H1 (cell line): ENCODE measurements at regions of chr15 and their contacts with region 1.

Region 1: DNA sequence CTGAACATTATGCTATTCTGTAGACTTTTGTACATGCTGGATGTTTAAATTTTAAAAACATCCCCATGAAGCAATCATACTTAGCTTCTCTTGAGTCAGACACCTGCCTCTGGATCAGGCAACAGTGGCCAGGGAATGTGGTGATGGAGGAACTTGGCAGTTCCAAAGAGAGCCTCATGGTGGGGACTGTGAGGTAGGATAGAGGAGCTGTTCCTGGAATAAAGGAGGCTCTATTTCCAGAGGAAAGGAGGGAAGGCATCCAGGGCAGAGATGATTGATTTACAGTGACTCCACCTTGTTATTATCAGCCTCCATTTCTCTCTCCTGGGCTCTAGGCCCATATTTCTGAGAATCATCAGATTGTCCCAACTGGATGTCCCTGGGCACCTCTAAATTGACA is 35.0 kb upstream of the ABHD17C start:
- DNase-seq: peak in 1 of 2 experiments; percentile 52
- H3K4me3 ChIP-seq: no peak overlapping the region
- H3K27ac ChIP-seq: no peak overlapping the region
- H3K4me1 ChIP-seq: no peaks in the 10 kb centered on the region
- H3K27me3 ChIP-seq: no peaks in the 10 kb centered on the region; a peak in 1 of 7 replicates
- CTCF ChIP-seq: peak; percentile 57 to 81 (median 75)
- EP300 ChIP-seq: no peak
- POLR2A ChIP-seq: no peak
- RAD21 ChIP-seq: peak; percentile 83 to 86

Region 2: GRCh38 chr15:80485370-80486164 is 174.6 kb before region 1 on chr15:
- CTCF ChIA-PET with region 1: no interaction called
- POLR2A ChIA-PET with region 1: no interaction called
- DNase-seq: no peak
- H3K4me3 ChIP-seq: no peak overlapping the region
- H3K27ac ChIP-seq: no peak overlapping the region
- H3K4me1 ChIP-seq: peaks cover 0 to 4% (median 2%) of the 10 kb centered on the region in 4 experiments; a peak in 4 of 7 replicates
- H3K27me3 ChIP-seq: no peaks in the 10 kb centered on the region
- CTCF ChIP-seq: no peak
- EP300 ChIP-seq: no peak
- POLR2A ChIP-seq: no peak
- RAD21 ChIP-seq: no peak

Region 3: GRCh38 chr15:80588801-80589200 is 71.3 kb before region 1 on chr15:
- CTCF ChIA-PET with region 1: interaction called, 13 read pairs
- POLR2A ChIA-PET with region 1: no interaction called
- DNase-seq: no peak
- H3K4me3 ChIP-seq: no peak overlapping the region
- H3K27ac ChIP-seq: no peak overlapping the region
- H3K4me1 ChIP-seq: peaks cover 0 to 6% (median 5%) of the 10 kb centered on the region in 4 experiments; a peak in 4 of 7 replicates
- H3K27me3 ChIP-seq: no peaks in the 10 kb centered on the region
- CTCF ChIP-seq: no peak
- EP300 ChIP-seq: no peak
- POLR2A ChIP-seq: no peak
- RAD21 ChIP-seq: no peak

Region 4: DNA sequence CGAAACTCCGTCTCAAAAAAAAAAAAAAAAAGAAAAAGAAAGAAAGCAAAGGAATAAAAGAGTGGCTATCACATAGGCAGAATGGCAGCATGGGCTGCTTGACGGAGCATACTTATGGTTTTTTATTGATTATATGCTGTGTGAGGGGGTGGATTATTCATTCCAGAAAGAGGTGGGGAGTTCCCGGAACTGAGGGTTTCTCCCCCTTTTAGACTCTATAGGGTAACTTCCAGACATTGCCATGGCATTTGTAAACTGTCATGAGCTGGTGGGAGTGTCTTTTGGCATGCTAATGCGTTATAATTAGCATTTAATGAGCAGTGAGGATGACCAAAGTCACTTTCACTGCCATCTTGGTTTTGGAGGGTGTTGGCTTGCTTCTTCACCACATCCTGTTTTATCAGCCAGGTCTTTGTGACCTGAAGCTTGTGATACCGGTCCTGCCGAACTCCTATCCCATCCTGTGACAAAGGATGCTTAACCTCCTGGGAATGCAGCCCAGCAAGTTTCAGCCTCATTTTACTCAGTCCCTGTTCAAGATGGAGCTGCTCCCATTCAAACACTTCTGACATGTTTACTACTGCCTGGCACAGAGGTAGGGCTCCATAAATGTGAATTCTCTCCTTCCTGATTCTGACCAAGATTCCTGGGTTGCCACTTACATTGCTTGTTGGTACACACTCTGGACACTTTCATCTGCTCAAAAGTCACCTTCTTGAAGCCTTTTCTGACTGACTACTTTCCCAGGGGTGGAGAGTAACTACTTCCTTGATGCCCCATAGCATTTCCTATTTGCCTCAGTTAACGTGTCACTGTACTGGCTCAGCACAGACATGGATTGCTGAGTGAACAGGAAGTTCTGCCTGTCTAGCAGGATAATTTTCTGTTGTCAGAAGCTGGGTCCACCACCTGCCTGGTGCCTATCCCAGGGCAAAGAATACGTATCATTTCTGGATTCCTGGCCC is 19.3 kb after region 1 on chr15:
- CTCF ChIA-PET with region 1: interaction called, 45 read pairs
- POLR2A ChIA-PET with region 1: no interaction called
- DNase-seq: no peak
- H3K4me3 ChIP-seq: no peak overlapping the region; a peak in 1 of 8 replicates
- H3K27ac ChIP-seq: no peak overlapping the region
- H3K4me1 ChIP-seq: no peaks in the 10 kb centered on the region
- H3K27me3 ChIP-seq: 0 out of 7 replicates have a peak, but pooled peaks cover 0 to 2% (median 0%) of the 10 kb centered on the region in 4 experiments
- CTCF ChIP-seq: no peak
- EP300 ChIP-seq: no peak
- POLR2A ChIP-seq: no peak
- RAD21 ChIP-seq: no peak